ENCODE measurements at regions of chr12 and their contacts with region 1.

Region 1: DNA sequence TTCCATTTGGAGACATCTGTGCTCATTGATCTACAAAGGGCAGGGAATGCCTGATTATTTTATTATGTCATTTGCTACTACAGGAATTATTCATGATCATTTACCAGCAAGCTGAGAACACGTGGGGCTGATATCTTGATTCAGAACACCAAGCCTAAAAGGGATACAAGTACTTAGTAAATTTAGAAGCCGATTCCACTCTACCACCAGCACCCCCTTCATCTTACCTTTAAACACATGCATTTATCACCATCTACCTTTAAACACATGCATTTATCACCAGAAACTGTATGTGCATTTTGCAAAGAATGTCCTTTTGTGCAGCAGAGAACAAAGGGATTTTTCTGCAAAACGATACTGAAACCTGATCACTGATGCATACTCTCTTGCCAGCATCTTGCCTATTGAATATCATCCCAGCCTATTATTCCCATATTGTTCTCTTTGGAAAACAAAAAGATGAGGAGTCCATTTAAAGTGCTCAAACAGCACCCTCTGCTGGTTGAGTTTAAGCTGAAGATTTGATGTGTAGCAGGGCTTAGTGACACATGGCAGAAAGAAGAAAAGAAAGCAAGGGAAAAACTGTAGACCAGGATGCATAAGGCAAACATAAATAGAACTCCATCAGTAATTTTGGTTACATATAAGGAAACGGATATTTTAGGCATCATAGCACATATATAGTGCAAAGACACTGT is 132.6 kb upstream of the PLEKHG7 start:
- DNase-seq: peak; percentile 79
- H3K4me3 ChIP-seq: no peak overlapping the region
- H3K27ac ChIP-seq: no peak overlapping the region
- H3K4me1 ChIP-seq: no peaks in the 10 kb centered on the region
- H3K27me3 ChIP-seq: no peaks in the 10 kb centered on the region
- CTCF ChIP-seq: peak; percentile 73

Region 2: GRCh38 chr12:91382081-91382543 is 1188.1 kb before region 1 on chr12:
- intact Hi-C with region 1: loop called (anchors 2 kb)
- DNase-seq: peak; percentile 90
- H3K4me3 ChIP-seq: peak overlapping the region; percentile 0
- H3K27ac ChIP-seq: peak overlapping the region; percentile 41
- H3K4me1 ChIP-seq: no peaks in the 10 kb centered on the region
- H3K27me3 ChIP-seq: no peaks in the 10 kb centered on the region
- CTCF ChIP-seq: peak; percentile 76

Region 3: GRCh38 chr12:91811481-91812287 is 758.5 kb before region 1 on chr12:
- intact Hi-C with region 1: loop called (anchors 5 kb)
- DNase-seq: peak; percentile 87
- H3K4me3 ChIP-seq: no peak overlapping the region
- H3K27ac ChIP-seq: no peak overlapping the region
- H3K4me1 ChIP-seq: no peaks in the 10 kb centered on the region
- H3K27me3 ChIP-seq: no peaks in the 10 kb centered on the region
- CTCF ChIP-seq: peak; percentile 78